ENCODE measurements at regions of chr17 and their contacts with region 1.

Region 1: DNA sequence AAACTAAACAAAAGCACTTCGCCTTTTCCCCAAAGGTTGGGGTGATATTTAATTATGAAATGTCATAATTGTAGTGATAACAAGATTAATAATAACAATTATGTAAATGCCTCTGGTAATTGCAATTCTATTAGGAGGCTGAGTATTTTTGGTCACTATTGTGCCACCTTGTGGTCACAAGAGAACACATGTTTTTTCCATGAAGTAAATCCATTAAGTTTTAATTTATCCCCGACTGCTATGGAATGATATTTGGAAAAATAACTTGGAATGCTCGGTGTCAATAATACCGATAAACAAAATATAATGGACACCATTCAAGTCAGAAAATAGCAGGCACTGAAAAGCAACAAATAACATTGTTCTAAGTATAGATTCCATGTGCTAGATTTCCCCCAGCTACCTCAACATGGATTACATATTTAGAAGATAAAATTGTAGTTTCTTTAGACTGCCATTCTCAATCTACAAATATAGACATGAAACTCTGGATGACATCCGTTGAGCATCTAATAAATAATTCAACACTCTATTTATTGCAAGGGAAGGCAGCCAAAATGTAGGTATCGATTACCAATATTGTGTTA is 25.0 kb upstream of the KCNJ2 start:
- DNase-seq: no peak
- H3K4me3 ChIP-seq: no peak overlapping the region
- CTCF ChIP-seq: peak in 1 of 3 donors; percentile 37
- POLR2A ChIP-seq: no peak

Region 2: GRCh38 chr17:69607162-69607834 is 537.1 kb before region 1 on chr17:
- intact Hi-C with region 1: loop called (anchors 10 kb)
- DNase-seq: peak; percentile 70 to 93
- H3K4me3 ChIP-seq: no peak overlapping the region
- CTCF ChIP-seq: peak in 1 of 3 donors; percentile 52
- POLR2A ChIP-seq: no peak

Region 3: DNA sequence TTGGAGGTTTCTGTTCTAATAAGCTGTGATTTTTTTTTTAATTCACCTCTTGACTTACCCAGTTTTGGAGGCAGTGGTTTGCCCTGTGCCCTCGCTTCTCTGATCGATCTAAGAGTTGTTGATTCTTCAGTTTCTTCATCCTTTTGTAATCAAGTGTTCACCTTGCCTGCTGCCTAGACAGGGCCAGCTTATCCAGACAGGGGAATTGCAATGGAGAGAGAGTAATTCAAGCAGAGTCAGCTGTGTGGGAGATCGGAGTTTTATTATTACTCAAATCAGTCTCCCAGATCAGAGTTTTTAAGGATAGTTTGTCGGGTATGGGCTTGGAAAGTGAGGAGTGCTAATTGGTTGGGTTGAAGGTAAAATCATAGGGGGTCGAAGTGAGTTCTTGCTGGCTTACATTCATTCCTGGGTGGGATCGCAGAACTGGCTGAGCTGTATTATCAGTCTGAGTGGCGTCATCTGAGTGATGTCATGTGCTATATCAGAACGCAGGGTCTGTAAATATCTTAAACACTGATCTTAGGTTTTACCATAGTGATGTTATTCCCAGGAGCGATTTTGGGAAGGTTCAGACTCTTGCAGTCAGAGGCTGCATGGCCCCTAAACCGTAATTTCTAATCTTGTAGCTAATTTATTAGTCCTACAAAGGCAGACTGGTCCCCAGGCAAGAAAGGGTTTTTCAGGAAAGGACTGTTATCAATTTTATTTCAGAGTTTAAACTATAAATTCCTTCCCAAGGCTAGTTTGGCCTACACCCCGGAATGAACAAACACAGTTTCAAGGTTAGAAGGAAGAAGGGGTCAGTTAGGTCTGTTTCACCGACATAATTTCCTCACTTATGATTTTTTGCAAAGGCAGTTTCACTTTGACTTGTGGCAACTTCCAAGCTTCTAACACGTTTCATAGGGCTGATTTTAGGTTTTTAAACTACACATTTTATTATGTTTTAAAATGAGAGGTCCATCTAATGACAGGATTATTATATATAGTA is 90.8 kb before region 1 on chr17:
- intact Hi-C with region 1: no loop called
- DNase-seq: no peak
- H3K4me3 ChIP-seq: no peak overlapping the region
- CTCF ChIP-seq: no peak
- POLR2A ChIP-seq: no peak

Region 4: GRCh38 chr17:70423562-70423961 is 279.2 kb after region 1 on chr17:
- intact Hi-C with region 1: no loop called
- DNase-seq: no peak
- H3K4me3 ChIP-seq: no peak overlapping the region
- CTCF ChIP-seq: no peak
- POLR2A ChIP-seq: no peak

Region 5: DNA sequence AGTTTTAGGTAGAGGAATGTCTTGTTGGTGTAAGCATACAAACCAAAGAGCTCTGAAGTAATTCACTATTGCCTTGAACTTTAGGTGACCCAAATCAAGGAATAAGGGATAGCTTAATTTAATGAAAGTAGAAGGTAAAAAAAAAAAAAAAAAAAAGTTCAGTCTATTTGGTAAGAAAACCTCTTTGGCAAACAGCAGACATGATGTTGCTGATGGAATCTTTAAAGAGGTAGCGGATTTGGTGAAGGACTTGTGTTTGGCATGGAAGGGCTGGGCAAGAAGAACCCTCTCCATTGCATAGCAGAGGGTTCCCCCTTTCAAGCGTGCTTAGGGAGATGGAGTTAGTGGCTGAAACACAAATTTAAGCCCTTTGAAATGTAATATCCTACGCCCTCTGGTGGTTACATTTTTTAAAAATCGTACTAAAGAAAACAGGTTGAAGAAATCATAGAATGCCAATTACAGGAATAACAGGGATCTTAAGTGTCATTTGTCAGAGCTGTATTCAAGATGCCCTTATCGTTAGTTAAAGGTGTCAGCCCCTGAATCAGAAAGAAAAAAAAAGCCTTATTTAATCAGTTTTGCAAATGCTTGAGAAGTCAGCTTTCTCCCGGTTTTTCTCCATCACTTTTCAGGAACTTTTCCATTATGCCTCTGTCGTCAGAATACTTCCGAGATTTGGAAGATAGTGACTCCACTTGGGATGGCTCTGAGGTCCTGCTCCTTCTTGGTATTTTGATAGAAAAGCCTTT is 408.1 kb after region 1 on chr17:
- intact Hi-C with region 1: loop called (anchors 10 kb)
- DNase-seq: no peak
- H3K4me3 ChIP-seq: no peak overlapping the region
- CTCF ChIP-seq: no peak
- POLR2A ChIP-seq: no peak

Measured in lower leg skin (tissue), 4 donors.